ENCODE measurements at regions of chr1 and their contacts with region 1.

Region 1: GRCh38 chr1:165827268-165828102 is at the start of gene UCK2:
- DNase-seq: peak; percentile 84 to 94
- ATAC-seq: peak; percentile 90
- H3K4me3 ChIP-seq: peak within 1 kb of the TSS; percentile 69 to 75
- H3K27ac ChIP-seq: peak within 1 kb of the TSS; percentile 72 to 88
- H3K4me1 ChIP-seq: no peaks in the 10 kb centered on the region
- H3K27me3 ChIP-seq: no peaks in the 10 kb centered on the region
- total RNA-seq, gene UCK2: 27.2 to 31.1 TPM

Region 2: GRCh38 chr1:165703648-165704047 is 123.8 kb before region 1 on chr1:
- intact Hi-C with region 1: loop called in 1 of 2 experiments (anchors 10 kb)
- DNase-seq: no peak
- ATAC-seq: no peak
- H3K4me3 ChIP-seq: no peak overlapping the region
- H3K27ac ChIP-seq: no peak overlapping the region
- H3K4me1 ChIP-seq: no peaks in the 10 kb centered on the region
- H3K27me3 ChIP-seq: no peaks in the 10 kb centered on the region

Region 3: GRCh38 chr1:165898837-165899236 is 71.4 kb after region 1 on chr1:
- intact Hi-C with region 1: loop called (anchors 2 to 5 kb)
- DNase-seq: peak; percentile 79 to 85
- ATAC-seq: peak; percentile 68
- H3K4me3 ChIP-seq: no peak overlapping the region
- H3K27ac ChIP-seq: peak overlapping the region; percentile 90 to 100
- H3K4me1 ChIP-seq: peaks cover 0 to 4% of the 10 kb centered on the region in 2 donors
- H3K27me3 ChIP-seq: no peaks in the 10 kb centered on the region

Measured in aorta (tissue), 5 donors.